Dorsolateral prefrontal cortex (tissue), 120 donors: ENCODE measurements at regions of chr7 and their contacts with region 1.

Region 1: GRCh38 chr7:95045236-95045923 is 138.0 kb downstream of the PPP1R9A start:
- DNase-seq: peak in 7 of 10 donors; percentile 25 to 80 (median 58)
- H3K4me3 ChIP-seq: no peak overlapping the region
- H3K27ac ChIP-seq: peak overlapping the region in 22 of 59 donors; percentile 22 to 96 (median 90)
- H3K27me3 ChIP-seq: no peaks in the 10 kb centered on the region
- CTCF ChIP-seq: peak in 52 of 56 donors; percentile 17 to 73 (median 45)

Region 2: DNA sequence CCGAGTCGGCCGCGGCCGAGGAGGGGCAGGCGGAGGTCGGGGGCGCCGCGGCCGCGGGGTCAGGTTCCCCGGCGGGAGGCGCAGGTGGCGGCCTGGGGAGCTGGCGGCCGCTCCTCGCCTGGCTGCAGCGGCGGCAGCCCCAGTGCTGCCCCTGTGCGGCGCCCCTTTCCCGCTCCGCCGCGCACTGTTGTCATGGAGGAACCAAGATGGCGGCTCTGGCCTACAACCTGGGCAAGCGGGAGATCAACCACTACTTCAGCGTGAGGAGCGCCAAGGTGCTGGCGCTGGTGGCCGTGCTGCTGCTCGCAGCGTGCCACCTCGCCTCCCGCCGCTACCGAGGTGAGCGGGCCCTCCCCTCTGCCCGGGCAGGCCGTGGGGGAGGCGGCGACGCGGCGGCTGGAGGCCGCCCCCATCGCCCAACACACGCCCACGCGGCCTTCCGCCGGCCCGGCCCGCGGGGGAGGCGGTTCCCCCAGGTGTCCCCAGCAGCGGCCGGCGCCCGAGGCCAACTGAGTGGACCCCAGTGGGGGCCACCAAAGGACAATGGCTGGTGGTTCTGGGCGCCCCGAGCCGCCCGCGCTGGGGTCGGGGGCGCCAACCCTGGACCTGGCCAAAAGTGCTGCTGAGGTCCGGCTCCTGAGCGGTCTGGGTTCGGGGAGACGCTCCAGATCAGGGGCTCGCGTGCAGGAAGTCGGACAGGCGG is 535.4 kb before region 1 on chr7:
- intact Hi-C with region 1: loop called in 1 of 2 experiments (anchors 5 kb)
- DNase-seq: peak; percentile 51 to 80 (median 62)
- H3K4me3 ChIP-seq: peak overlapping the region; percentile 66 to 97 (median 88)
- H3K27ac ChIP-seq: peak overlapping the region; percentile 84 to 99 (median 96)
- H3K27me3 ChIP-seq: no peaks in the 10 kb centered on the region
- CTCF ChIP-seq: peak in 44 of 56 donors; percentile 7 to 65 (median 33)

Region 3: DNA sequence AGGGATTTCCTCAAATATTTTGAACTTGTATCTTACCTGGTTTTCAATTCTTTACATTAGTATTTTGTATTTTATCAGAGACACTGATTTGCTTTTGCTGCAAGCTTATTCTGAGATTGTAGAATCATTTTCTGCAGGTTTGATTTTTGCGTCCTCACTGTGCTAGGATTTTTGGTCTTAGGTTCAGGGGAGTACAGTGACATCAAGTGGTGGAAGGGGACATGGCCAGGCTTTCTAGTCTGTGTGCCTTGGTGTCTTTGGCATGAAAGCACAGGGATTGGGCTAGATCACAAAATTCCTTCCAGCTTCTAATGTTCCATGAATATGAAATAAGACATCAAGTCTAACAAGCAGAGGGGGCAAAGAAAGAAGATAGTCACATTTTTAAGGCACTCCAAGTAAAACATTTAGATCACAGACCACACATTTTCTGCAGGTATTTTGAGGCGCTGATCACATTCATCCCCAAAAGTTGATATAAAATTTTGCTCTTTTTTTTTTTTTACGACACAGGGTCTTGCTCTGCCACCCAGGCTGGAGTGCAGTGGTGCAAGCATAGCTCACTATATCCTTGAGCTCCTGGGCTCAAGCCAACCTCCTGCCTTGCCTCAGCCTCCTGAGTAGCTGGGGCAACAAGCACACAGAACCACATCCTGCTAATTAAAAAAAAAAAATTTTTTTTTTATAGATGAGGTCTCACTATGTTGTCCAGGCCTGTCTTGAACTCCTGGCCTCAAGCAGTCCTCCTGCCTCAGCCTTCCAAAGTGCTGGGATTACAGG is 154.6 kb after region 1 on chr7:
- intact Hi-C with region 1: loop called in 1 of 2 experiments (anchors 5 kb)
- DNase-seq: peak in 9 of 10 donors; percentile 43 to 80 (median 52)
- H3K4me3 ChIP-seq: no peak overlapping the region
- H3K27ac ChIP-seq: peak overlapping the region in 29 of 59 donors; percentile 1 to 67 (median 36)
- H3K27me3 ChIP-seq: no peaks in the 10 kb centered on the region
- CTCF ChIP-seq: peak; percentile 28 to 89 (median 78)